Activated CD8-positive, alpha-beta memory T cell treated with anti-CD3 and anti-CD28 coated beads, Interleukin-2, amount 10 ng/mL, durations not matched to agents 7 days and 5 days (primary cell): ENCODE measurements at regions of chr1 and their contacts with region 1.

Region 1: GRCh38 chr1:16078925-16079656 is 5.6 kb upstream of the FAM131C start:
- DNase-seq: peak; percentile 86
- ATAC-seq: peak; percentile 88
- H3K4me3 Mint-ChIP-seq: peak overlapping the region; percentile 43
- H3K27ac Mint-ChIP-seq: peak overlapping the region; percentile 89
- H3K4me1 Mint-ChIP-seq: peaks cover 13% of the 10 kb centered on the region
- H3K27me3 Mint-ChIP-seq: peaks cover 8% of the 10 kb centered on the region

Region 2: GRCh38 chr1:16064536-16065268 is 14.4 kb before region 1 on chr1:
- CTCF ChIA-PET with region 1: interaction called, 99 read pairs
- DNase-seq: no peak
- ATAC-seq: peak; percentile 32
- H3K4me3 Mint-ChIP-seq: peak overlapping the region; percentile 52
- H3K27ac Mint-ChIP-seq: peak overlapping the region; percentile 78
- H3K4me1 Mint-ChIP-seq: peaks cover 53% of the 10 kb centered on the region
- H3K27me3 Mint-ChIP-seq: peaks cover 20% of the 10 kb centered on the region

Region 3: DNA sequence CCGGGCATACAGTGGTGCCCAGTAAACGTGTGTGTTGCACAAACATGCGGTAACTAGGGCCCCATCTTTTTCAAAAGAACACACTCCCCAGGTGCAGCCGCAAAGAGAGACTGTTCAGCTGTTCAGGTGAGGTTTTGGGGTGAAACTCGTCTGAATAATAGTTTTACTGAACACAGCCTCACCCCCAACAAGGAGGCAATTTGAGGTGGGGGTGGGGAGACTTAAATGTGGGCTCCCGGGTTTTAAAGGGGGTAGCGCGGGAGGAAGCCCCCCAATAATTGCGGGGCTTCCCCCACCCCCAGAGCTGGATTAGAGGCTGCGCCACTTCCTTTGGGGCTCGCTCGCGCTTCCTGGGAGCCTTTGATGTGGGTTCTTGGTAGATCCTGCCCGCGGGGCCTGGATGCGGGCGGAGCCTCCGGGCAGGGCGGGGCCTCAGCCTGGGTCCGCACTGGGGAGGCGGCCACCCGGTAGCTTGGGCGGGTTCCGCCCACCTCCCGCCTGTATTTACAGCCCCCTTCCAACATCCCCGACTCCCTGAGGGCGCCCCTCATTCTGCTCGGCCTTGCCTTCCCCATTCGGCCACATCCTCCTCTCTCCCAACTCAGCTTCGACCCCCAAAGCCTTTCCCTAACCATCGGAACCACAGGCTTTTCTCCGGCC is 83.2 kb after region 1 on chr1:
- CTCF ChIA-PET with region 1: interaction called, 13 read pairs
- DNase-seq: peak; percentile 56
- ATAC-seq: peak; percentile 87
- H3K4me3 Mint-ChIP-seq: no peak overlapping the region
- H3K27ac Mint-ChIP-seq: no peak overlapping the region
- H3K4me1 Mint-ChIP-seq: peaks cover 27% of the 10 kb centered on the region
- H3K27me3 Mint-ChIP-seq: peaks cover 19% of the 10 kb centered on the region

Region 4: DNA sequence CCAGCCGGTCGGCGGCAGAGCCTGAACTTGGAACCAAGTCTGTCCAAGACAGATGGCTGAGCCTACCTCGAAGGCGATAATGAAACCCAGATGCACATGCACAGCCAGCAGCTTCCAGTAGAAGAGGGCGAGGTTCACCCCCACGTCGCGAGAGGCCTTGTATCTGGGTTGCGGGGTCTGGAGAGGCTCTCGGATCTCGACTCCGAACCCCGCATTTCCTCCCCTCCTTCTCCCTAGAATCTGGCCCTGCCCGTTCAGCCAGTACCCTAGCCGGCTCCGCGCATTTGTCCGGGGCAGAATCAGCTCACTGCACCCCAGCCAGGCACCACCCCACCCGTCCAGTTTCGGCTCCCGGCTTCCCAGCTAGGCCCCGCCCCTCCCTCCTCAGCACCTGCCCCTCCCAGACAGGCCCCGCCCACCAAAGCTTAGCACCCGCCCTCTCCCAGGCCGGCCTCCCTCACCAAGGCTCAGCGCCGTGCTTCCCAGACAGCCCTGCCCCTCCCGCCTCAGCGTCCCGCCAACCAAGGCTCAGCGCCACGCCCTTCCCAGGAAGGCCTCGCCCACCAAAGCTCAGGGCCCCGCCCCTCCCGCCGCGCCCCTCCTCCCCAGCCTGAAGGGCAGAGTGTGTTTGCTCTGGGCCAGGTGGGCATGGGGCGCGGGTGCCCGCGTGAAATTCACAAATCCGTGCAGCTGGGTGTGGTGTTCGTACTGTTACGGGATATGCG is 138.1 kb after region 1 on chr1:
- CTCF ChIA-PET with region 1: interaction called, 16 read pairs
- DNase-seq: peak; percentile 98
- ATAC-seq: peak; percentile 97
- H3K4me3 Mint-ChIP-seq: peak overlapping the region; percentile 85
- H3K27ac Mint-ChIP-seq: peak overlapping the region; percentile 87
- H3K4me1 Mint-ChIP-seq: peaks cover 24% of the 10 kb centered on the region
- H3K27me3 Mint-ChIP-seq: peaks cover 11% of the 10 kb centered on the region

Region 5: DNA sequence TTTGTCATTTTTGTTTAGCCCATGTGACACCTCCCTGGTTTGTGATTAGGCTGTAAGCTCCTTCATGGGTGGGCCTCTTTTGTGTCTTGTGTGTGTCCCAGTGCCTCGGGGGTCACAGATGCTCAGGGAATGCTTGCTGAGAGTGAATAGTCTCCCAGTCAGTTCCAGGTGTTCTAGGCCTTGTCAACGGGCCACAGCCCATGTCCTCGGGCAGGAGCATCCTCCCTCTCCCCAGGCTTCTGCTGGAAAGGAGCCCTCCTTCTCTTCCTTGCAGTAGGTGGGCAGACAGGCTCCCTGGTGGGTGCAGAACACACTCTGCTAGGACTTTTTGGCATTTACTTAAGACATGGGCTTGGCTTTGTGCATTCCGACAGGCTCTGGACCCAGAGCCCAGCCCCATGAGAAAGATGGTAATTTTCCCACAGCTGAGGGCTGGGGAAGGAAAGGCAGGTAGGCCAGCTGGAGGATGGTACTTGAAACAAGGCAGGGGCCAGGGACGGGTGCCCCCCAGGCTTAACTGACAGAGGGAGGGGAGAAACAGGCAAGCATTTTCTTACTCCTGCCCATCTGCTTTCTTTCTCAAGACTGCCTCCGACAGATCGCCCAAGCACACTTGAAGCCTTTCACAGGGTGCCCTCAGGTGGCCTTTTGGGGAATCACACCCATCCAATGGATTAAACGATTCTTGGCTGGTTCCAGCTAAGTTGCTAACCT is 165.0 kb after region 1 on chr1:
- CTCF ChIA-PET with region 1: interaction called, 50 read pairs
- DNase-seq: peak; percentile 85
- ATAC-seq: peak; percentile 84
- H3K4me3 Mint-ChIP-seq: no peak overlapping the region
- H3K27ac Mint-ChIP-seq: no peak overlapping the region
- H3K4me1 Mint-ChIP-seq: peaks cover 10% of the 10 kb centered on the region
- H3K27me3 Mint-ChIP-seq: no peaks in the 10 kb centered on the region